Cardiac septum (tissue), 1 donor: ENCODE measurements at regions of chr11 and their contacts with region 1.

Region 1: DNA sequence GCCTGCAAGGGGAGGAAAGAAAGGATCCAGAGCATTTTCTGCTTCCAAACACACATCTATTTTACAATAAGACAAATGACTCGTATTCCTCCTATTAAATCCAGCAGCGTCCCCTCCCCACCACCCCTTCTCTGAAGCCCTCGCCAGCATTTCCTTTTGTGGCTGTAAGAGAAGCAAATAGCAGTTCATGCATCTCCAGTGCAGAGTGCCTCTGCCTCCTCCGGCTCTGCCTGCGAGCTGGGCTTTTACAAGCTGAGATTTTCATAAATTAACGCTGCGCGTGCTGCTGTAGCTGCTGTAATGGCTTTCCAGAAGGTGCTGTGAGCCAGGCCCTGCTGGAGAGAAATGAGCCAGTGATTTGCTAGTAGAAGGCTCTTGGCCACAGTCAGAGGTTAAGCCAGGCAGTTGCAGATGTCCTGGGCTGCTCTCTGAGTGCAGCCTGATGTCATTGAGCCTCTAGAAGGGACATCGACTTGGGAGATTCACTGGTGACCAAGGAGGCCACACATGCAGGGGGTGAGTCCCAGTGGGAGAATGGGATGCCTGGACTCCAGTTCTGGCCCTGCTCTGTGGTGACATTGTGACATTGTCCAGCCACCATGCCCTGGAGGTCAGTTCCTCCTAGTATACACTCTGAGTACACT is 134.5 kb upstream of the NAV2 start:
- DNase-seq: no peak

Region 2: DNA sequence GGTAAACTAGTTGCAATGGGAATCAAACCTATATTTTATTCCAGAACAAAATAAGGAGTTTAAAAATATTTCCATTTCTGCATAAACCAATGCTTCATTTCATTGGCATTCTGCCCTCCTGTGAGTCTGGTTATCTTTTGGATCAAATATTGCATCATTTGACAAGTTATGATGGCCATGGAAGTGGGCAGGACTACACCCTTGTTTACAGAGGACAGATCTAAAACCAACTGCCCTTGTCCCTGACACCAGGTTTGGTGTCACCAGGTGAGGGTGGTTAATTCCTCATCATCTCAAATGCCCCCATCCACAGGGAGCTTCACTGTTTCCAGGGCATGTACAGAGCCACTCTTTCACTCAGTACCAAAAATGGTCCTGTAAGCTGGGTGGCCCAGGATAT is 309.1 kb before region 1 on chr11:
- intact Hi-C with region 1: no loop called
- DNase-seq: no peak

Region 3: GRCh38 chr11:19605520-19606371 is 27.6 kb after region 1 on chr11:
- intact Hi-C with region 1: no loop called
- DNase-seq: no peak

Region 4: DNA sequence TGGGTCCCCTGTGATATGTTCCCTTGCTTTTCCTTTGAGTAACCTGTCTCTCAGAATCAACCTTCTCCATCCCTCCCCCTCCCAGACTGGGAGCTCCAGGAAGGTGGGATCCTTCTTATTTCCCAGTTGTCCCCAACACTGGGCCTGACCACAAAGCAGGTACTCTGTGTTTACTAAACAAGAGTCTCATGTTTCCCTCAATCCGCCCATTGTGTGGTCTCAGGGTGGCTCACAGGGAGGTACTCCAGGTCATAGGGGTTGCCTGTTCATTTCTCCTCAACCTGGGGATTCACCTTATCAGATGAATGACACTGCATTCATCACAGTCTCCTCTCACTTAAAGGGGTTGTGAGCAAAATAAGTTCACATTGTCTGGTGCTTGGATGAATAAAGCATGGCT is 108.1 kb after region 1 on chr11:
- intact Hi-C with region 1: no loop called
- DNase-seq: no peak

Region 5: GRCh38 chr11:19698493-19699292 is 120.6 kb after region 1 on chr11:
- intact Hi-C with region 1: loop called (anchors 5 kb)
- DNase-seq: no peak

Region 6: GRCh38 chr11:19712281-19713220 is 134.5 kb after region 1 on chr11 and contains the start of gene NAV2:
- intact Hi-C with region 1: loop called (anchors 2 kb)
- DNase-seq: peak; percentile 95
- total RNA-seq, gene NAV2: 50.8 TPM

Region 7: GRCh38 chr11:19777377-19778102 is 199.4 kb after region 1 on chr11:
- intact Hi-C with region 1: no loop called
- DNase-seq: no peak